Activated T-helper 2 cell treated with anti-CD3 and anti-CD28 coated beads, Interferon-gamma antibody, Interleukin-2, Interleukin-4, amounts not matched to agents 10 μg/mL and 5 μg/mL and 100 μg/mL, durations not matched to agents 14 hours and 24 hours and 36 hours (primary cell): ENCODE measurements at regions of chr5 and their contacts with region 1.

Region 1: DNA sequence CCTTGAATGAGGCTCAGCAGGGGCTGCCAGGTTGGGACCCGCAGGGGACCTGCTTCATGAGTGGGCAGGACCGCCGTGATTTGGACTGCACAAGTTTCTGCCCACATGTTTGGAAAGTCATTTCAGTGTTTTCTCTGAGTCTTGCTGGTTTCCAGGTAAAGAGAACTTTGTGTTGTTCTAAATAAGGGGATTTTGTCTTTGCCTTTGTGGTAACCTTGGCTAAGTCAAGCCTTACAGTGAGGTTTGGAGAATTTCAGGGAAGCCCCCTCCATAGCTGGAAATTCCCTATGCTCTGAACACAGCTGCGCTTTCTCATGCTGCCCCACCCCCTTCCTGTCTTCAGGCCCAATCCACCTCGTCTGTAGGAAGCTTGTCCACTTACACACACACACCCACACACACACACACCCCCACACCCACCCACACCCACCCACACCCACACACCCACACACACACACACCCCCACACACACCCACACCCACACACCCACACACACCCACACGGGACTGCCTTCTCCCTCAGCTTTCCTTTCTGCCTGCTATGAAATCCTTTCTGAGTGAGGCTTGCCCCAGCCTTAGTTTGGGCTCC is 270.1 kb downstream of the HSPA4 start:
- DNase-seq: no peak
- H3K4me3 Mint-ChIP-seq: no peak overlapping the region
- H3K27ac Mint-ChIP-seq: peak overlapping the region; percentile 39
- H3K4me1 Mint-ChIP-seq: peaks cover 8% of the 10 kb centered on the region
- H3K27me3 Mint-ChIP-seq: no peaks in the 10 kb centered on the region

Region 2: DNA sequence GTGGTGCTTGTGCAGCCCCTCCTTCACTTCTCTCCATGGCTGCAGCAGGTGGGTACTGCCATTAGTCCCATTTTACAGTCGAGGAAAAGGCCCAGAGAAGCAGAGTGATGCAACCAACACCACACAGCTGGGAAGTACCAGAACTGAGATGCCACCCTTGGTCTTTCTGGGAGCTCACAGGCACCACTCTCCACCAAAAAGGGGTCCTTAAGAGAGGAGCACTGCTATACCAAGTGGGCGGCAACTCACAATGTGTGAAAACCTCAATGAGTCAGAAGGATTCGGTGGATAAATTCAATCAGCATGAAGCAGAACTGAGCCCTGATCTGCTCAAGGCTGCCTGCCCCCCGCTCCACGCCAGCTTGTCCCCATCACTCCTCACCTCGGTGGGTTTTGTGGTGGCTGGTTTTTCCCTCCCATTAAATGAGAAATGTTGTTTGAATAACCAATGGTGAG is 76.7 kb after region 1 on chr5:
- intact Hi-C with region 1: loop called (anchors 2 kb)
- DNase-seq: peak; percentile 3
- H3K4me3 Mint-ChIP-seq: no peak overlapping the region
- H3K27ac Mint-ChIP-seq: no peak overlapping the region
- H3K4me1 Mint-ChIP-seq: peaks cover 16% of the 10 kb centered on the region
- H3K27me3 Mint-ChIP-seq: no peaks in the 10 kb centered on the region